ENCODE measurements at regions of chr12 and their contacts with region 1.

Region 1: GRCh38 chr12:101830367-101831325 is at the start of gene GNPTAB:
- DNase-seq: peak; percentile 94 to 95
- ATAC-seq: peak; percentile 93 to 94
- H3K4me3 ChIP-seq: peak within 1 kb of the TSS; percentile 73
- H3K27ac ChIP-seq: peak within 1 kb of the TSS; percentile 79 to 93
- H3K4me1 ChIP-seq: peaks cover 19% of the 10 kb centered on the region
- CTCF ChIP-seq: peak; percentile 91
- EP300 ChIP-seq: no peak
- POLR2A ChIP-seq: peak; percentile 76
- RAD21 ChIP-seq: peak; percentile 44 to 64; a peak in 4 of 5 replicates
- polyA plus RNA-seq, gene GNPTAB: 29.3 and 35.2 TPM in 2 replicates

Region 2: GRCh38 chr12:101703487-101703886 is 127.2 kb before region 1 on chr12:
- CTCF ChIA-PET with region 1: no interaction called
- POLR2A ChIA-PET with region 1: no interaction called
- DNase-seq: no peak
- ATAC-seq: no peak
- H3K4me3 ChIP-seq: no peak overlapping the region
- H3K27ac ChIP-seq: no peak overlapping the region
- H3K4me1 ChIP-seq: peaks cover 16% of the 10 kb centered on the region
- CTCF ChIP-seq: no peak
- EP300 ChIP-seq: no peak
- POLR2A ChIP-seq: no peak
- RAD21 ChIP-seq: no peak

Region 3: DNA sequence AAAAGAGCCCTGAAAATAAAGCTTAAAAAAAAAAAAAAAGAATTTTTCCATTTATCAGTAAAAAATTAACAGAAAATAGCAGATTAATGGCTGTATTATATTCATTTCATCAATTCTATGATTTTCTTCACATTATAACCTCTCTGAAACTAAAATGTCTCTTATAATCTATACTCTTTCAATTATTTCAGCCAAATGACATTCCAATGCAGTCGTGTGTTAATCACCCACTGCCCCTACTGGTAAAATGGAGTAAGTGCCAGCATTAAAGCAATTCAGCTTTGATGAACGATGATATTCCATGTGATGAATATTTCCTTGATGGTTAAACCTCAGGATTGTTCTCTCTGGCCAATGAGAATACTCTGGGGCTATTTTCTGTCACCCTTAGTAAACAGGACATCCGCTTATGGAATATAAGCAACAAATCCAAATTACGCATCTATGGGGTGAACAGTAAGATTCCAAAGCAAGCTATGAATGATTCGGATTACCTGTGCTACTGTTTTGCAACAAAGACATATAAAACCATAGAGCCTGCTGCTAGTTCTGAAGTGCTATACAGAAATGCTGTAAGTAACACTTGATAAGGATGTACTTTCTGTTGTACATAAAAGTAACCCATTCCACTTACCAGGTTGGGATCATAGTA is 71.1 kb before region 1 on chr12:
- CTCF ChIA-PET with region 1: interaction called, 11 read pairs
- POLR2A ChIA-PET with region 1: interaction called, 5 read pairs
- DNase-seq: peak; percentile 43
- ATAC-seq: peak; percentile 80 to 89; a peak in 5 of 6 replicates
- H3K4me3 ChIP-seq: no peak overlapping the region
- H3K27ac ChIP-seq: no peak overlapping the region
- H3K4me1 ChIP-seq: 0 out of 3 replicates have a peak, but pooled peaks cover 3% of the 10 kb centered on the region
- CTCF ChIP-seq: peak; percentile 64
- EP300 ChIP-seq: no peak
- POLR2A ChIP-seq: no peak
- RAD21 ChIP-seq: peak; percentile 57 to 76

Region 4: GRCh38 chr12:101792051-101792931 is 38.4 kb before region 1 on chr12:
- CTCF ChIA-PET with region 1: interaction called, 26 read pairs
- POLR2A ChIA-PET with region 1: interaction called, 9 read pairs
- DNase-seq: no peak
- ATAC-seq: peak; percentile 87 to 88; a peak in 5 of 6 replicates
- H3K4me3 ChIP-seq: no peak overlapping the region
- H3K27ac ChIP-seq: no peak overlapping the region
- H3K4me1 ChIP-seq: no peaks in the 10 kb centered on the region
- CTCF ChIP-seq: peak; percentile 40; the same call in 2 of the 3 replicates
- EP300 ChIP-seq: no peak
- POLR2A ChIP-seq: no peak
- RAD21 ChIP-seq: peak; percentile 26 to 28; a peak in 4 of 5 replicates

Region 5: DNA sequence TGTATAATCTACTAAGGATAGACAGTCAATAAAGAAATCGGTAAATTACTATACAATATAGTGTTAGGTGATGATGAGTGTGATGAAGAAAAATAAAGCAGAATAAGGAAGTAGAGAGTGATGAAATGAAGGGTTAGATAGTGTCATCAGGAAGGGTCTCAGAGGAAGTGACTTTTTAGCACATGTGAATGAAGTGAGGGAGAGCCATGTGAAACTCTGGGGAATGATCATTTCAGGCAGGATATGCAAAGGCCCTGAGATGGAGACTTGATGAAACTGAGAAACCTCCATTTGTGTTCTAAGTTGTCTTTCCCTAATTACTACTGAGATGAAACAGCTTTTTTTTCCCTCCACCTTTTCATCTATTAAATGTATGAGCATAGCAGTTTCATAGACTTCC is 19.6 kb after region 1 on chr12:
- CTCF ChIA-PET with region 1: interaction called, 12 read pairs
- POLR2A ChIA-PET with region 1: interaction called, 3 read pairs
- DNase-seq: no peak
- ATAC-seq: no peak
- H3K4me3 ChIP-seq: no peak overlapping the region
- H3K27ac ChIP-seq: no peak overlapping the region
- H3K4me1 ChIP-seq: peaks cover 3% of the 10 kb centered on the region; the same call in 2 of the 3 replicates
- CTCF ChIP-seq: no peak
- EP300 ChIP-seq: no peak
- POLR2A ChIP-seq: no peak
- RAD21 ChIP-seq: no peak

Region 6: DNA sequence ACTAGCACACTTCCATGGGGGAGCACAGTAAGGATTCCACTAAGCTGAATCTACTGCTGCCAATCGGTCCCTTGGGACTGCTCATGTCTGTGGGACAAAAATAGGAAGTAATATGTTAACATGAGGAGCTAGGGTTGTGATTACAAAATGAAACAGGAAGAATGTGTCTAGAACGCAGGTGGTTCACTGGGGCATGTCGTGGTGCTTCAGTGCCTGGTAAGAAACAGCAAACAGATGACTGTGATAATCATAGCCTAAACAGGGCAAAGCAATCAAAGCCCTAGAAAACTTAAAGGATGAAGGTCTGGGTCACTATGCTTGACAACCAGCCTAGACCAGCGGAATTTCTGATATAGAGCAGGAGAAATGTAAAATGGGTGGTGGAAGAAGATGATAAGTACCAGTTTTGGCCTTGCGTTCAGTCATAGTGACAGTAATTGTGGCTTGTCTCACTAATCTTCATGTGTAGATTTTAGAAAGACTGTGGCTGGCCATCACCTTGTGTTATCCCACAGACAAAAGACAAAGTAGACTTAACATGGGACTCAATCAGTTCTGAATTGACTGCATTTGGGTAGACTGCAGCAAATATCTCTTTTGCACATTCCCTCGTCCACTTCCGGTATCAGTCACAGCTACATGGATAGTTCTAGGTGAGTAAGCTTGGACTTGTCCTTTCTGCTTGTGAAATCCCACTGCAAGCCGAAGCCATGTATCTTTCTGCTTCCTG is 179.8 kb after region 1 on chr12:
- CTCF ChIA-PET with region 1: no interaction called
- POLR2A ChIA-PET with region 1: no interaction called
- DNase-seq: no peak
- ATAC-seq: no peak
- H3K4me3 ChIP-seq: no peak overlapping the region
- H3K27ac ChIP-seq: no peak overlapping the region
- H3K4me1 ChIP-seq: no peaks in the 10 kb centered on the region
- CTCF ChIP-seq: no peak
- EP300 ChIP-seq: no peak
- POLR2A ChIP-seq: no peak
- RAD21 ChIP-seq: no peak

Measured in A549 (cell line).